Left cardiac atrium (tissue), 4 donors: ENCODE measurements at regions of chr15 and their contacts with region 1.

Region 1: DNA sequence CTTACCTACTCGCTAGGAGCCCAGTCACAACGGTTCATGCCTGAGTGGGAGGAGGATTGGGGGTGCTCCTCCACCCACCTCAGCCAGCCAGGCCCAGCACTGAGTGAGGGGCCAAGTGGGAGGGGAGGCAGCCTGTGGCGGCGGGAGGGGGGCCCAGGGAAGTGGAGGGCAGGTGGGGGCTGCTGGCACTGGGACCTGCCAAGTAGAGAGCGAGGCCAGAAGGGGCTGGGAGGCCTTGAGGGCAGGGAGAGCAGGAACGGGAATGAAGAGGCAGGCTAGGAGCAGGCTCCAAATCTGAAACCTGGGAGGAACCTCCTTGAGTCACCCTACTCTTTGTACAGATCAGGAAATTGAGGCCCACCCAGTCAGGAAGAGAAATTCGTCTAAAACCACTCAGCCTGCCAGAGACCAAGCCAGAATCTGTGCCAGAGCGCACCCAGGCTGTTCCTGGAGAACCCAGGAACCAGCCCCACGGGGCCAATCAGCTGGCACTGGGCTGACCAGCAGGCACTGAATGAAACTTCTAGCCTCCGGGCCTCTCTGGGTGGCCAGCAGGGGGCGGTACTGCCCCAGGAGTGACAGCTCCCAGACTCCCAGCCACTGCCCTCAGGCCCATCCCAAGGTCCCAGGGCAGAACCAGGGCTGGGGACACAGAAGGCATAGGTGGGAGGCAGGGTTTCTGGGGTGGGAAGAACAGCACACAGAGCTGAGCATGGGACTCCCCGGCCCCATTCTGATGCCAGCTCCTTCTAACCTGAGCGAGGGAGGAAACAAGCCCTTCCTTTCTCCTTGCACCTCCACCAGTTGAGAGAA is 14.8 kb upstream of the CYP11A1 start:
- DNase-seq: peak; percentile 89
- ATAC-seq: peak; percentile 88 to 93

Region 2: DNA sequence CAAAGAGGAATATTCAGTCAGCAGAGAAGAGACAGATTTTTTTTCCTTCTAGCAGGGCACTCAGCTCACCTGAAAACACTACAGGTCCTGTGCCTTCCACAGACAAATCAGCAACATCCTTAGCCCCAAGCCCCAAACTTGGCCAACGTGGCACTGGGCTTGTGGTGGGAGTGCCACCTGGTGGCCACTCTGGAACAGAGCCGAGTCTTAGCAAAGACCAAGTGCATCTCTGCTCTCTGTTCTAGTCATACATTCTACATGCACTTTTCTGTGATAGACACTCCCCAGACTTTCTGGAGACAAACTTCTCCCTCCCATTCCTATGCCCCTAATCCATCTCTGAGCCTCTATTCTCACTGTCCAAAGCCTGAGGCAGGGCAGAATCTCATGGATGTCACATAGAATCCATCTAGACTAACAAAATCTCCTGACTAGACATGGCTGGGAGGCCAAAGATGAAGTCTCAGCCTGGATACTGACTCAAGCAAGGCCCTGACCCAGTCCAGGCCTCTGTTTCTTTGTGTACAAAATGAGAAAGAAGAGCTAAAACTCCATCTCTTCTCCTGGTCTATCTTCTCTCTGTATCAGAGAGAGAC is 56.6 kb after region 1 on chr15:
- intact Hi-C with region 1: loop called (anchors 1 to 2 kb)
- DNase-seq: peak; percentile 74
- ATAC-seq: peak; percentile 59

Region 3: GRCh38 chr15:74489518-74490338 is 107.5 kb after region 1 on chr15:
- intact Hi-C with region 1: loop called in 1 of 2 experiments (anchors 2 kb)
- DNase-seq: peak; percentile 31
- ATAC-seq: peak in 1 of 2 donors; percentile 62